Activated B cell treated with CpG ODN at 0.5 μM for 24 hours (primary cell): ENCODE measurements at regions of chr4 and their contacts with region 1.

Region 1: GRCh38 chr4:176195184-176195978 is at the start of gene SPATA4:
- DNase-seq: peak; percentile 94
- ATAC-seq: peak; percentile 97
- H3K4me3 Mint-ChIP-seq: peak within 1 kb of the TSS; percentile 87
- H3K27ac Mint-ChIP-seq: peak within 1 kb of the TSS; percentile 87
- H3K4me1 Mint-ChIP-seq: peaks cover 10% of the 10 kb centered on the region
- H3K27me3 Mint-ChIP-seq: peaks cover 41% of the 10 kb centered on the region
- CTCF ChIP-seq: no peak
- total RNA-seq, gene SPATA4: not detected in 2 replicates

Region 2: DNA sequence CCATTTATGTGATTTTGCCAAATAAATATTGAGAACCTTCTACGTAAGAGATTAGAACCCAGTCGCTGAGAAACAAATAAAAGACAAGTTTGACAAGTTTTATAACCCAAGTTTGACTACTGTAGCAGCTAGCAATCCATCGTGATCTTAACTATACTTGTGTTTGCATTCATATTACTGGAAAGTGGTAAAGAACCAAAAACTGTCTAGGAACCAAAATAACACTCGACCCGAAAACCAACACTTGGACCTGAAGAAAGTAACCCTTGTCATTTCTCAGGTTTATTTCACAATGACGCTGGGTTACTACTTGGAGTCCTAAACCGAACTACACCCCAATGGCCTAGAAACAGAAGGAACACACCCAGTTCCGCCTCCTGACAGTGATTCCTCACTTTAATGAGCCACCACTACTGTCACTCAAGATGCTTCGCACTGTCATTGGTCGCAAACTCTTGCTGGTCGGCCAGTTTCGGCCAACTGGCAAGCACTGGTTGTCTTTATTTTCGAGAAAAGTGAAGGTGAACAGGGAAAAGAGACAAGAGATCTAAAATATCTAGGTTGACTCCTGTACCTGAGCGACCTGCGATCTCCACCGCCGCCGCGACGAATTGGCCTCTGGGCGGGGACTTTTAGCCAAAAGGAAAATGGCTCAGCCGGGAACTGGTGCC is 1912.4 kb before region 1 on chr4:
- CTCF ChIA-PET with region 1: no interaction called
- POLR2A ChIA-PET with region 1: no interaction called
- intact Hi-C with region 1: loop called (anchors 5 kb)
- DNase-seq: peak; percentile 54
- ATAC-seq: peak; percentile 96
- H3K4me3 Mint-ChIP-seq: peak overlapping the region; percentile 99
- H3K27ac Mint-ChIP-seq: peak overlapping the region; percentile 99
- H3K4me1 Mint-ChIP-seq: peaks cover 58% of the 10 kb centered on the region
- H3K27me3 Mint-ChIP-seq: no peaks in the 10 kb centered on the region
- CTCF ChIP-seq: no peak

Region 3: DNA sequence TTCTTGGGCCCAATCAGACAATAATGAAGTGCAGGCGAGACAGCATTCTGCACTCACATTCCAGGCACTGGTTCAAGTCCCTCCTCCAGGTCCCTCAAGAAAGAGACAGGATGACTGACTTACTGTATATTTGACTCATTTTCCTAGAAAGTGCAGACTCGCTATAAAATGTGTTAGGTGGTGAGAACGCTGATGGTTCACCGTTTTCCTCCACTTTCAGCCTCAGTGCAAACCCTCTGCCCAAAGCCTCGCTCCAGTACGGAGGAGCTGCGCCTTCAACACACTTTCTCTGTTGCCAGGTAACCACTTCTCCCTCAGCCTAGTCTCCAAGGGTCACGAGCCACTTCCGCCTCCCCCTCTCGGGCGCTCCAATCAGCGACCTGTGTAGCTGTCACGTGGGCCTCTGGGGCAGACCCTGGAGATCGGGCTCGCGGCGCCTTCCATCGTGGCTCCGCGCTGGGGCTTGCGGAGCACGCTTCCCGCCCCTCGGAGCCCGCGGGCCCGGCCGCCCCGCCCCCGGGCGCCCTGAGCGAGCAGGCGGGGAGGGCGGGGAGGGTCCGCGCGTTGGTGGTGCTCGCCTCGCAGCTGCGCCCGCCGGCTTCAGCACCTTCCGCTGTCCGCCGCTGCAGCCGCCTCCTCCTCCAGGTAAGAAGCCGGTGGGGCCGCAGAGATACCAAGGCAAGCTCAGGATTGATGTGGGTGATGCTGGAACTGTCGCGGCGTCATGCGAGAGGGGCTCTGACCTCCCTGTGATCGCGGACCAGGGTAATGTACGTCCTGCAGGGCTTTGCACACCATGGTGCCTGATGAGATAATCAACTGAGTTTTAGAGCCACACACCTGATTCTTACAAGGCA is 129.7 kb before region 1 on chr4 and contains the start of gene WDR17:
- CTCF ChIA-PET with region 1: no interaction called
- POLR2A ChIA-PET with region 1: no interaction called
- intact Hi-C with region 1: loop called (anchors 1 kb)
- DNase-seq: peak; percentile 79
- ATAC-seq: peak; percentile 97
- H3K4me3 Mint-ChIP-seq: peak within 1 kb of the TSS; percentile 90
- H3K27ac Mint-ChIP-seq: peak within 1 kb of the TSS; percentile 73
- H3K4me1 Mint-ChIP-seq: peaks cover 11% of the 10 kb centered on the region
- H3K27me3 Mint-ChIP-seq: peaks cover 3% of the 10 kb centered on the region
- CTCF ChIP-seq: no peak
- total RNA-seq, gene WDR17: 5.7 and 6.2 TPM in 2 replicates

Region 4: GRCh38 chr4:176090115-176090514 is 105.3 kb before region 1 on chr4:
- CTCF ChIA-PET with region 1: no interaction called
- POLR2A ChIA-PET with region 1: interaction called, 3 read pairs
- intact Hi-C with region 1: loop called (anchors 1 kb)
- DNase-seq: no peak
- ATAC-seq: peak; percentile 95
- H3K4me3 Mint-ChIP-seq: peak overlapping the region; percentile 9
- H3K27ac Mint-ChIP-seq: peak overlapping the region; percentile 33
- H3K4me1 Mint-ChIP-seq: peaks cover 20% of the 10 kb centered on the region
- H3K27me3 Mint-ChIP-seq: no peaks in the 10 kb centered on the region
- CTCF ChIP-seq: no peak

Region 5: DNA sequence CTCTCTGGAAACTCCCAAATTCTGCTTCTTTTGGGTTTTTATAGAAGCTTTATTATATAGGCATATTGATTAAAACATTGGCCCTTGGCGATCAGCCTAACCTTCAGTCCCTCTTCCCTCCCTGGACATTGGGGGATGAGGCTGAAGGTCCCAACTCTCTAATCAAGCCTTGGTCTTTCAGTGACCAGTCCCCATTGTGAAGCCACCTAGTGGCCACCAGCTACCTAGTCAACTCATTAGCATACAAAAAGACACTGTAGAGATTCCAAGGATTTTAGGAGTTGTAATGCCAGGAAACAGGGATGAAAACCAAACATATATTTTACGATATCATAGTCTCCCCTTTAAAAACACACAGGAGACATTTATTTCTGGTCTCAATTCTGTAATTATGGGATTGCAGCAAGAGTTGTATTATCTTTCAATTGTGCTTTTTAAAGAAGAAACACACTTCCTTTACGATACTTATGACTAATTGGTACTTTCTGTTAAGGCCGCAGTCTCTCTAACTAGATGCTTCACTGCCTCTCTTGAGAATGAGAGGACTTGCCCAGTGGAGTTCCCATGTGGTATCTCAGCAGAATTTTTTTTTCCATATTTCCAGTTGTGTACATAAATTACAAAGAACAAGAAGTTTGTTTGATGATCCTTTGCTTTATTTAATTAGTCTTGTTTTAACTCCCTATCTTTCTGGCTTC is 71.5 kb before region 1 on chr4:
- CTCF ChIA-PET with region 1: no interaction called
- POLR2A ChIA-PET with region 1: no interaction called
- intact Hi-C with region 1: loop called (anchors 1 kb)
- DNase-seq: no peak
- ATAC-seq: peak; percentile 96
- H3K4me3 Mint-ChIP-seq: peak overlapping the region; percentile 56
- H3K27ac Mint-ChIP-seq: peak overlapping the region; percentile 67
- H3K4me1 Mint-ChIP-seq: peaks cover 20% of the 10 kb centered on the region
- H3K27me3 Mint-ChIP-seq: no peaks in the 10 kb centered on the region
- CTCF ChIP-seq: no peak

Region 6: GRCh38 chr4:176241703-176242102 is 46.3 kb after region 1 on chr4:
- CTCF ChIA-PET with region 1: no interaction called
- POLR2A ChIA-PET with region 1: no interaction called
- intact Hi-C with region 1: no loop called
- DNase-seq: no peak
- ATAC-seq: no peak
- H3K4me3 Mint-ChIP-seq: no peak overlapping the region
- H3K27ac Mint-ChIP-seq: no peak overlapping the region
- H3K4me1 Mint-ChIP-seq: no peaks in the 10 kb centered on the region
- H3K27me3 Mint-ChIP-seq: peaks cover 7% of the 10 kb centered on the region
- CTCF ChIP-seq: no peak

Region 7: GRCh38 chr4:177441803-177442622 is 1246.6 kb after region 1 on chr4 and contains the start of gene AGA:
- CTCF ChIA-PET with region 1: no interaction called
- POLR2A ChIA-PET with region 1: interaction called, 4 read pairs
- intact Hi-C with region 1: loop called (anchors 1 kb)
- DNase-seq: peak; percentile 90
- ATAC-seq: peak; percentile 91
- H3K4me3 Mint-ChIP-seq: peak within 1 kb of the TSS; percentile 86
- H3K27ac Mint-ChIP-seq: peak within 1 kb of the TSS; percentile 91
- H3K4me1 Mint-ChIP-seq: peaks cover 23% of the 10 kb centered on the region
- H3K27me3 Mint-ChIP-seq: no peaks in the 10 kb centered on the region
- CTCF ChIP-seq: no peak
- total RNA-seq, gene AGA: 27.7 and 31.1 TPM in 2 replicates